Mammary epithelial cell (primary cell): ENCODE measurements at regions of chr22 and their contacts with region 1.

Region 1: GRCh38 chr22:45263463-45264269 is 21.1 kb upstream of the UPK3A start:
- DNase-seq: peak; percentile 91
- H3K4me3 ChIP-seq: no peak overlapping the region
- H3K27ac ChIP-seq: no peak overlapping the region
- H3K4me1 ChIP-seq: peaks cover 16% of the 10 kb centered on the region
- H3K27me3 ChIP-seq: no peaks in the 10 kb centered on the region
- CTCF ChIP-seq: peak; percentile 67 to 89

Region 2: DNA sequence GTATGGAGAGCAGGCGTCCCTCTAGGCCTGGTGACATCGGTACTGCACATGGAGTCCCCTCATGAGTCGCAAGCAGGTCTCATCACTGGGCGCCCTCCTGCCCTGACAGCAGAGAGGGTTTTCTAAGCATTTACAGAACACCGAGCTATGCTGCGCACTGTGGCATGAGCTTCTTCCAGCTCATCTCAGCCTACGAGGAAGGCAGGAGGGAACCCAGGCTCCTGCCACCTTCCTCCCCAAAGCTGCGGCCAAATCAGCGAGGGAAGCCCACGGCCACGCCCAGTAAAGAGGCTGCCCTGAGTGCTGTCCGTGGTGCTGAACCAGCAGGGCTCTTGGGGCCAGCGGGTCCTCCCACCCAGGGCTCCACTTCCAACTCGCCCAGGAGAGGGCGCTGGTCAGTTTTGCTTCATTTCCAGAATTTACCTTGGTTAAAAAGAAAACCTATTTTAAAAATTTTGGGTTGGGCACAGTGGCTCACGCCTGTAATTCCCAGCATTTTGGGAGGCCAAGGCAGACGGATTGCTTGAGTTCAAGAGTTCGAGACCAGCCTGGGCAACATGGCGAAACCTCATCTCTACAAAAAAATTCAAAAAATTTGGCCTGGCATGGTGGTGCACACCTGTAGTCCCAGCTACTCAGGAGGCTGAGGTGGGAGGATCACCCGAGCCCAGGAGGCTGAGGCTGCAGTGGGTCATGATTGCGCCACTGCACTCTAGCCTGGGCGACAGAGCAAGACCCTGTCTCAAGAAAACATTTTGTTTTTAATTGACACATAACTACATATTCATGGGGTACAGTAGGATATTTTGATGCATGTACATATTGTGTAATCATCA is 288.0 kb before region 1 on chr22:
- CTCF ChIA-PET with region 1: no interaction called
- dilution Hi-C with region 1: no loop called
- in situ Hi-C with region 1: no loop called
- intact Hi-C with region 1: loop called (anchors 5 kb)
- DNase-seq: peak; percentile 68
- H3K4me3 ChIP-seq: no peak overlapping the region
- H3K27ac ChIP-seq: no peak overlapping the region
- H3K4me1 ChIP-seq: no peaks in the 10 kb centered on the region
- H3K27me3 ChIP-seq: peaks cover 3% of the 10 kb centered on the region
- CTCF ChIP-seq: peak; percentile 62 to 85

Region 3: GRCh38 chr22:45019861-45020655 is 243.6 kb before region 1 on chr22:
- CTCF ChIA-PET with region 1: no interaction called
- dilution Hi-C with region 1: no loop called
- in situ Hi-C with region 1: no loop called
- intact Hi-C with region 1: no loop called
- DNase-seq: no peak
- H3K4me3 ChIP-seq: no peak overlapping the region
- H3K27ac ChIP-seq: no peak overlapping the region
- H3K4me1 ChIP-seq: no peaks in the 10 kb centered on the region
- H3K27me3 ChIP-seq: no peaks in the 10 kb centered on the region
- CTCF ChIP-seq: no peak

Region 4: GRCh38 chr22:45101515-45102227 is 162.0 kb before region 1 on chr22:
- CTCF ChIA-PET with region 1: interaction called, 3 read pairs
- dilution Hi-C with region 1: no loop called
- in situ Hi-C with region 1: no loop called
- intact Hi-C with region 1: loop called (anchors 1 kb)
- DNase-seq: peak; percentile 15
- H3K4me3 ChIP-seq: no peak overlapping the region
- H3K27ac ChIP-seq: no peak overlapping the region
- H3K4me1 ChIP-seq: peaks cover 12% of the 10 kb centered on the region
- H3K27me3 ChIP-seq: no peaks in the 10 kb centered on the region
- CTCF ChIP-seq: peak; percentile 66 to 81

Region 5: DNA sequence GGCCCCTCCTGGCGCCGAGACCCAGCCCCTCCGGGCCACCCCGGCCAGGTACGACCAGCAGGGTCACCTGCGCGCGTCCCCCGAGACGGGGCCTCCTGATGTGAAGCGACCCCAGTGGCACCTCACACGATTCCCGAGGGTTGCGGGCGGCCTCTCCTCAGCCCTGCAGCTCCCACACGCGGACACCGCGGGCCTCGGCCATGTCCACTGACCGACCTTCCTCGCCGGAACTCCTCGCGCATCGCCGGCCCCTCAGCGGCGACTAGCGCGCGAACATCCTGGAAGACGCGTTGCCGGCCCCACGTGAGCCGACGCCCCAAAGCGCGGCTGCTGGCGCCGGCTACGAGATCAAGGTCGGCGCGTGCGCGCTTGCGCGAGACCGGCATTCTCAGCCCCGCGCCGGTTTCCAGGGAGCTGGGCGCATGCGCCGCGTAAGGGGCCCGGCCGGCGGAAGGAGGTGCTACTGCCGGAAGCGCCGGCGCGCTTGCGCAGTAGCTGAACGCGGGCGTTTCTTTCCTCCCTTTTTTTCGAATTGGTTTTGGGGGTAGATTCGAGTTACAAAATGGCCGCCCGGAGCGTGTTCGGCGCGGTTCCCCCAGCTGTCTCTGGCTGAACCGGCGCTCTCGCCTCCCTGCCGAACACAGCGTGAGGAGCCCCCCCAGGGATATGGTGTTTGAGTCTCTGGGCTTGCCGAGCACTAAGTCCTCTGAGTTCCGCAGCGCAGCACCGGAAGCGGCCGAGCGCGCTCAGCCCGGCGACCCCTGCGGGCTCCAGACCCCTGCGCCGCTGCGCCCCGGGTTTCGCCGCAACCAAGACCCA is 100.0 kb before region 1 on chr22 and contains the start of gene NUP50:
- CTCF ChIA-PET with region 1: no interaction called
- dilution Hi-C with region 1: no loop called
- in situ Hi-C with region 1: no loop called
- intact Hi-C with region 1: loop called (anchors 2 kb)
- DNase-seq: peak; percentile 96
- H3K4me3 ChIP-seq: peak within 1 kb of the TSS; percentile 78 to 96 (median 91)
- H3K27ac ChIP-seq: peak within 1 kb of the TSS; percentile 98
- H3K4me1 ChIP-seq: peaks cover 30% of the 10 kb centered on the region
- H3K27me3 ChIP-seq: no peaks in the 10 kb centered on the region
- CTCF ChIP-seq: peak in 1 of 2 donors; percentile 18
- total RNA-seq, gene NUP50: 33.7 to 81.5 TPM

Region 6: GRCh38 chr22:45192701-45193187 is 70.9 kb before region 1 on chr22:
- CTCF ChIA-PET with region 1: no interaction called
- dilution Hi-C with region 1: no loop called
- in situ Hi-C with region 1: no loop called
- intact Hi-C with region 1: loop called (anchors 5 kb)
- DNase-seq: no peak
- H3K4me3 ChIP-seq: no peak overlapping the region
- H3K27ac ChIP-seq: no peak overlapping the region
- H3K4me1 ChIP-seq: no peaks in the 10 kb centered on the region
- H3K27me3 ChIP-seq: no peaks in the 10 kb centered on the region
- CTCF ChIP-seq: no peak

Region 7: DNA sequence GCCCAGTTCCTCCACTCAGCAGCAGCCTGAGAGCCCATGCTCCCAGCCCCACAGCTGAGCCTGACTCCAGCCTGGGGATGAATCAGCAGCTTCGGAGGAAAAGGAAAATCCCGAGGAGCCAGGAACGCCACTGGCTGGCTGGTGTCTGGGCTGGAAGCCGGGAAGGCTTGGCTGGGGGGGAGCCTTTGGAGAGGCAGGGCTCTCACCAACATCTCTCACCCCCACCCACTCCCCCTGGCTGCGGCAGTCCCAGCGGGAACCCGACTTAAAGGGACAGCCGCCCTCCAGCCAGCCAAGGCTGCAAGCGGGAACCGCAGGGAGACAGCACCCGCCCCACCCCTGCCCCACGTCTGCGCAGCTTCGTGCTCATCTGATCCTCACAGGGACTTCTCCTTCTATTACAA is 51.4 kb before region 1 on chr22:
- CTCF ChIA-PET with region 1: no interaction called
- dilution Hi-C with region 1: no loop called
- in situ Hi-C with region 1: no loop called
- intact Hi-C with region 1: loop called (anchors 1 kb)
- DNase-seq: peak; percentile 88
- H3K4me3 ChIP-seq: peak overlapping the region; percentile 34 to 37 (median 35)
- H3K27ac ChIP-seq: peak overlapping the region; percentile 66
- H3K4me1 ChIP-seq: peaks cover 24% of the 10 kb centered on the region
- H3K27me3 ChIP-seq: no peaks in the 10 kb centered on the region
- CTCF ChIP-seq: peak in 1 of 2 donors; percentile 14

Region 8: GRCh38 chr22:45246060-45246985 is 17.3 kb before region 1 on chr22:
- CTCF ChIA-PET with region 1: no interaction called
- dilution Hi-C with region 1: no loop called
- in situ Hi-C with region 1: no loop called
- intact Hi-C with region 1: loop called (anchors 2 kb)
- DNase-seq: peak; percentile 89
- H3K4me3 ChIP-seq: peak overlapping the region in 1 of 3 experiments; percentile 16
- H3K27ac ChIP-seq: peak overlapping the region; percentile 97
- H3K4me1 ChIP-seq: peaks cover 20% of the 10 kb centered on the region
- H3K27me3 ChIP-seq: no peaks in the 10 kb centered on the region
- CTCF ChIP-seq: no peak